Left cardiac atrium (tissue), 4 donors: ENCODE measurements at regions of chr7 and their contacts with region 1.

Region 1: GRCh38 chr7:11212080-11212711 is 238.5 kb downstream of the PHF14 start:
- DNase-seq: peak; percentile 33
- ATAC-seq: peak; percentile 75 to 78

Region 2: GRCh38 chr7:11168650-11169170 is 43.5 kb before region 1 on chr7:
- intact Hi-C with region 1: no loop called
- DNase-seq: no peak
- ATAC-seq: no peak

Region 3: DNA sequence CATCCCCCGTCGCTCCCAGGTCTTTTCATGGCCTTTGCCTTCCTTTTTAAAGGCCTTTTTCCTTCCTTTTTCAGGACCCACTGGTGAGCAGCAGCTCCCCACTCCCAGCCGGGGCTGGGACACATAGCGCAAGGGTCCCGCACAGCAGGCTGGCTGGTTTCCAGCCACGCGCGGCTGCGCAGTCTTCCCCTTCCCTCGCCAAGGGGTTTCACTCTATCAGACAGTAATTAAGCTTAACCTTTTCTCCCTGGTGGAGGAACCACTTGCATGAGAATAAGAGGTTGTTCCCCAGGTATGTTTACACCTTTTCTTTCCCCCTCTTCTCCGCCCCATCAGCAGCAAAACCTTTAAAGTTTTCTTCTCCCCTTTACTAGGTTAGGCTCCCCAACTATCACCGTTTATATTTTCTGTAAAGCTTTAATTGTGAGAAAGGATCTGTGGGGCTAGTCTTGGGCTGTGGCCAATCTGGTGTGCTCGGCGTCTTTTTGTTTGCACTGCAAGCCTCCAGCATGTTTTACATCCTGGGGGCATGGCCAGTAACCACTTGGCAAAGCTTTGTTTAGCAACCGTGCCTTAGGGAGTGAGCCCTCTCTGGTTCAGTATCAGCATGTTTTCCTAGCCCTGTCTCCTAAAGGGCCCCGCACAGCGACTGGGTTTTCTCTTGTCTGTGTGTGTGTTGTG is 18.9 kb before region 1 on chr7:
- intact Hi-C with region 1: no loop called
- DNase-seq: no peak
- ATAC-seq: peak; percentile 74 to 89

Region 4: GRCh38 chr7:11249799-11250198 is 37.6 kb after region 1 on chr7:
- intact Hi-C with region 1: loop called in 1 of 2 experiments (anchors 2 kb)
- DNase-seq: no peak
- ATAC-seq: no peak